Sigmoid colon (tissue), 7 donors: ENCODE measurements at regions of chr3 and their contacts with region 1.

Region 1: GRCh38 chr3:68876112-68876713 is 56.1 kb downstream of the TAFA4 start:
- DNase-seq: no peak
- H3K4me3 ChIP-seq: no peak overlapping the region
- H3K27ac ChIP-seq: no peak overlapping the region
- H3K4me1 ChIP-seq: peaks cover 0 to 13% (median 10%) of the 10 kb centered on the region in 4 donors
- H3K27me3 ChIP-seq: no peaks in the 10 kb centered on the region
- CTCF ChIP-seq: peak; percentile 47 to 89 (median 86)
- EP300 ChIP-seq: no peak
- POLR2A ChIP-seq: no peak

Region 2: GRCh38 chr3:67384760-67385397 is 1491.3 kb before region 1 on chr3:
- intact Hi-C with region 1: loop called (anchors 5 kb)
- DNase-seq: no peak
- H3K4me3 ChIP-seq: no peak overlapping the region
- H3K27ac ChIP-seq: no peak overlapping the region
- H3K4me1 ChIP-seq: peaks cover 0 to 5% (median 0%) of the 10 kb centered on the region in 4 donors
- H3K27me3 ChIP-seq: no peaks in the 10 kb centered on the region
- CTCF ChIP-seq: no peak
- EP300 ChIP-seq: no peak
- POLR2A ChIP-seq: no peak

Region 3: DNA sequence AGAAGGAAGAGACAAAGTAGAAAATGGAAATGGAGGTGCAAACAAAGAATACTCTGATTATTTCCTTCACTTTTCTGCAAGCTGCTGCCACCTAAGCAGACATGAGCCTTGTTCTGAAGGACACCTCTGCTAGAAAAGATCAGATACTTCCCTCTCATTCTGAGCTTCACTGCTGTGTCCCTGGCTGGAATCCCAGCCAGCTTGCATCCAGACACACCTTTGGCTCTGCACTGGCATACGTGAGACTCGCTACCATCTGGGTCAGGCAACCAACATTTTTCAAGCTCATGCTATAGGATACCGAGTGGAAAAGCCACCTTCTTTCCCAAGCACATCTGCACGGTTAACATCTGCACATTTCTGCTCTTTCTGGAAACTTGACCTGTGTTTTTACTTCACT is 1055.1 kb before region 1 on chr3:
- intact Hi-C with region 1: loop called (anchors 5 kb)
- DNase-seq: no peak
- H3K4me3 ChIP-seq: no peak overlapping the region
- H3K27ac ChIP-seq: no peak overlapping the region
- H3K4me1 ChIP-seq: no peaks in the 10 kb centered on the region
- H3K27me3 ChIP-seq: no peaks in the 10 kb centered on the region
- CTCF ChIP-seq: no peak
- EP300 ChIP-seq: no peak
- POLR2A ChIP-seq: no peak

Region 4: DNA sequence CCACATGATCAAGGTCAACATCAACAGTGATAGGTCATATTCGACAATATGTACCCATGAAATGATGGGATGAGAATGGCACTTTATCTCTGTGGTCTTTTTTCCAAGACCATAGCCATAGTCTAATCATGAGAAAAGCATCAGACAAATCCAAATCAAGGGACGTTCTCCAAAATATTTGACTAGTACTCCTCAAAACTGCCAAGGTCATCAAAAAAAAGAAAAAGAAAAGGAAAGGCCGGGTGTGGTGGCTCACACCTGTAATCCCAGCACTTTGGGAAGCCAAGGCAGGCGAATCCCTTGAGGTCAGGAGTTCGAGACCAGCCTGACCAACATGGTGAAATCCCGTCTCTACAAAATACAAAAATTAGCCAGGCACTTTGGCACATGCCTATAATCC is 262.1 kb before region 1 on chr3:
- intact Hi-C with region 1: no loop called
- DNase-seq: no peak
- H3K4me3 ChIP-seq: no peak overlapping the region
- H3K27ac ChIP-seq: no peak overlapping the region
- H3K4me1 ChIP-seq: no peaks in the 10 kb centered on the region
- H3K27me3 ChIP-seq: no peaks in the 10 kb centered on the region
- CTCF ChIP-seq: no peak
- EP300 ChIP-seq: no peak
- POLR2A ChIP-seq: no peak

Region 5: GRCh38 chr3:68963891-68964290 is 87.7 kb after region 1 on chr3:
- intact Hi-C with region 1: no loop called
- DNase-seq: no peak
- H3K4me3 ChIP-seq: no peak overlapping the region
- H3K27ac ChIP-seq: no peak overlapping the region
- H3K4me1 ChIP-seq: peaks cover 0 to 8% (median 3%) of the 10 kb centered on the region in 4 donors
- H3K27me3 ChIP-seq: peaks cover 0 to 6% (median 0%) of the 10 kb centered on the region in 3 donors
- CTCF ChIP-seq: no peak
- EP300 ChIP-seq: no peak
- POLR2A ChIP-seq: no peak

Region 6: GRCh38 chr3:69116897-69117296 is 240.7 kb after region 1 on chr3:
- intact Hi-C with region 1: no loop called
- DNase-seq: no peak
- H3K4me3 ChIP-seq: no peak overlapping the region
- H3K27ac ChIP-seq: no peak overlapping the region
- H3K4me1 ChIP-seq: no peaks in the 10 kb centered on the region
- H3K27me3 ChIP-seq: no peaks in the 10 kb centered on the region
- CTCF ChIP-seq: no peak
- EP300 ChIP-seq: no peak
- POLR2A ChIP-seq: no peak